Gastrocnemius medialis (tissue), 4 donors: ENCODE measurements at regions of chr9 and their contacts with region 1.

Region 1: DNA sequence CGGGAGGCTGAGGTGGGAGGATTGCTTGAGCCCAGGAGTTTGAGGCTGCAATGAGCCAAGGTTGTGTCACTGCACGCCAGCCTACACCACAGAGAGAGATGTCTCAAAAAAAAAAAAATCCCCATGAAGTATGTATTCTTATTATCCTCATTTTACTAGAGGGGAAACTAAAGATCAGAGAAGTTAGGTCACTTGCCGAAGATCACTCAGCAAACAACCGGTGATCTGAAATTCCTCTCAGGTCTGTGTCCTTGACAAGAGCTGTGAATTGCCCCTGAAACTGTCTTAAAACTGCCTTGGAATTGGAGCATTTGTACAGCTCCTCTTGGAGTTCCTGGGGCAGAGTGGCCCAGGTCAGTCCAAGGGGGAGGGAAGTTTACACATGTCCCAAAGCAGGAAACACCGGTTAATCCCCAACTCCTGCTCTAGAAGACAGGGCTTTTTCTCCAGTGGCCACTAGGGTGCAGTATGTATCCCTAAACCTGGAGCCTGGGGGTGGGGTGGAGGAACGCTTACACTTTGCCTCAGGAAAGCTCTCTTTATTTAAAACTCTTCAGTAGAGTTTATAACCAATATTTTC is 27.6 kb downstream of the AQP7 start:
- DNase-seq: peak; percentile 53 to 70
- ATAC-seq: peak; percentile 78 to 83
- H3K4me3 ChIP-seq: peak overlapping the region in 3 of 4 donors; percentile 12 to 26 (median 26)
- H3K27ac ChIP-seq: peak overlapping the region; percentile 54 to 73 (median 64)
- H3K4me1 ChIP-seq: peaks cover 17 to 26% of the 10 kb centered on the region in 2 donors
- H3K27me3 ChIP-seq: no peaks in the 10 kb centered on the region
- CTCF ChIP-seq: peak; percentile 78 to 85 (median 81)
- POLR2A ChIP-seq: no peak

Region 2: GRCh38 chr9:33415501-33416038 is 40.8 kb after region 1 on chr9:
- in situ Hi-C with region 1: loop called in 1 of 4 experiments (anchors 5 kb)
- intact Hi-C with region 1: loop called (anchors 2 kb)
- DNase-seq: peak; percentile 38 to 60
- ATAC-seq: peak; percentile 74 to 83
- H3K4me3 ChIP-seq: no peak overlapping the region
- H3K27ac ChIP-seq: no peak overlapping the region
- H3K4me1 ChIP-seq: no peaks in the 10 kb centered on the region
- H3K27me3 ChIP-seq: no peaks in the 10 kb centered on the region
- CTCF ChIP-seq: peak; percentile 63 to 84 (median 77)
- POLR2A ChIP-seq: no peak

Region 3: GRCh38 chr9:33466565-33467495 is 92.1 kb after region 1 on chr9:
- in situ Hi-C with region 1: loop called in 1 of 4 experiments (anchors 10 kb)
- intact Hi-C with region 1: loop called (anchors 1 kb)
- DNase-seq: peak in 1 of 2 donors; percentile 42
- ATAC-seq: peak in 1 of 2 donors; percentile 77
- H3K4me3 ChIP-seq: no peak overlapping the region
- H3K27ac ChIP-seq: no peak overlapping the region
- H3K4me1 ChIP-seq: no peaks in the 10 kb centered on the region
- H3K27me3 ChIP-seq: no peaks in the 10 kb centered on the region
- CTCF ChIP-seq: peak; percentile 86 to 90 (median 89)
- POLR2A ChIP-seq: no peak